ENCODE measurements at regions of chr6 and their contacts with region 1.

Region 1: DNA sequence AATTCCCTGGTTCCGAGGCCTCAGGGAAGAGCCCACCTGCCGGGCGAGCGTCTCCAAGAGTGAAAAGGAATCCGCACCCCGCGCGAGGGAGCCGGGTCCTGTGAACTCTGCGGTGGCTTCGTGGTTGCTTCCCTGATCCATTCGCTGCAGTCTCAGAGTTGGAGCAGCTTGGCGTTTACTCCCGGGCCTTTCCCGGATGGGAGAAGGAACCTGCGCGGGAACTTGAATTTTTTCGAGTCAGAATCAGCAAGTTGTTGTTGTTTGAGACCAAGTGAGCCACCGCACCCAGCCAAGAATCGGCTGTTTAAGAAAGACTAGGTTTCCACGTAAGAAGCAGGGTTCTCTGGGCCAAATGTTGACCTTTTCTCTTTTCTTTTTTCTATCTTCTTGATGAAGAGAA is 12.9 kb downstream of the PRSS16 start:
- DNase-seq: no peak
- ATAC-seq: no peak
- H3K4me3 ChIP-seq: no peak overlapping the region
- H3K27ac ChIP-seq: no peak overlapping the region
- H3K4me1 ChIP-seq: no peaks in the 10 kb centered on the region
- H3K27me3 ChIP-seq: peaks cover 7 to 77% (median 8%) of the 10 kb centered on the region in 3 donors
- CTCF ChIP-seq: no peak

Region 2: GRCh38 chr6:27078734-27079357 is 181.5 kb before region 1 on chr6:
- intact Hi-C with region 1: no loop called
- DNase-seq: no peak
- ATAC-seq: peak in 3 of 4 donors; percentile 62 to 90 (median 66)
- H3K4me3 ChIP-seq: peak overlapping the region; percentile 39
- H3K27ac ChIP-seq: no peak overlapping the region
- H3K4me1 ChIP-seq: no peaks in the 10 kb centered on the region
- H3K27me3 ChIP-seq: peaks cover 0 to 12% (median 11%) of the 10 kb centered on the region in 3 donors
- CTCF ChIP-seq: peak; percentile 63

Region 3: GRCh38 chr6:27114792-27115191 is 145.6 kb before region 1 on chr6:
- intact Hi-C with region 1: no loop called
- DNase-seq: no peak
- ATAC-seq: no peak
- H3K4me3 ChIP-seq: no peak overlapping the region
- H3K27ac ChIP-seq: no peak overlapping the region
- H3K4me1 ChIP-seq: no peaks in the 10 kb centered on the region
- H3K27me3 ChIP-seq: no peaks in the 10 kb centered on the region
- CTCF ChIP-seq: no peak

Region 4: DNA sequence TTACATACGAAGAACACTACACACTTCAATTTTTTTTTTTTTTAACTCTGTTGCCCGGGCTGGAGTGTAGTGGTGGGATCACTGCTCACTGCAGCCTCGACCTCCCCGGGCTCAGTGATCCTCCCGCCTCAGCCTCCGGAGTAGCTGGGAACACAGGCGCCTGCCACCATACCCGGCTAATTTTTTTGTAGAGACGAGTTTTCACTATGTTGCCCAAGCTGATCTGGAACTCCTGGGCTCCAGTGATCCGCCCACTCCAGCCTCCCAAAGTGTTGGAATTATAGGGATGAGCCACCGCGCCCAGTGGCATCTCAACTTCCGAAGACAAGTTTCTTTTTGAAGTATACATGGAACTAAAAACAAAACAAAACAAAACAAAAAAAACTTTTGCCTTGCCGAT is 279.2 kb after region 1 on chr6:
- intact Hi-C with region 1: loop called in 1 of 2 experiments (anchors 5 kb)
- DNase-seq: no peak
- ATAC-seq: no peak
- H3K4me3 ChIP-seq: no peak overlapping the region
- H3K27ac ChIP-seq: no peak overlapping the region
- H3K4me1 ChIP-seq: no peaks in the 10 kb centered on the region
- H3K27me3 ChIP-seq: peaks cover 8 to 68% (median 12%) of the 10 kb centered on the region in 3 donors
- CTCF ChIP-seq: no peak

Measured in psoas muscle (tissue), 8 donors.